ENCODE measurements at regions of chr3 and their contacts with region 1.

Region 1: DNA sequence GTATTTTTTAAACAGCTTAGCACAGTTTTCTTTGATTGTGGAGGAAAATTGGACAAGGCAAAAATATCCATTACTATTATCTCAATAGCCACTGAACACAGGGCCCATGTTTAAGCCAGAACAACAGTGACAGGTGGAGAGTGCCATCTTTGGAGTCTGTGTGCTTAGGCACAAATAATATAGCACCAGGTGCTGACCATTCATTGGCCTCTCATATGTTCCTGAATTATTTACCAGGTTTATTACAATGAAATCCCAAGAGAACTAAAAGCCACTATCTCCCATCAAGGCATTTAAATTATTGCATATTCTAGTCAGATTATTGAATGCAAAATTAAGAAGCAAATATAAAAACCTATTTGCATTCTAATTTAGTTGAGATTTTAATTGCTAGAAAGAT is 39.6 kb downstream of the GPR156 start:
- DNase-seq: no peak
- ATAC-seq: no peak
- H3K4me3 Mint-ChIP-seq: no peak overlapping the region
- H3K27ac Mint-ChIP-seq: no peak overlapping the region
- H3K4me1 Mint-ChIP-seq: no peaks in the 10 kb centered on the region
- H3K27me3 Mint-ChIP-seq: peaks cover 12% of the 10 kb centered on the region

Region 2: DNA sequence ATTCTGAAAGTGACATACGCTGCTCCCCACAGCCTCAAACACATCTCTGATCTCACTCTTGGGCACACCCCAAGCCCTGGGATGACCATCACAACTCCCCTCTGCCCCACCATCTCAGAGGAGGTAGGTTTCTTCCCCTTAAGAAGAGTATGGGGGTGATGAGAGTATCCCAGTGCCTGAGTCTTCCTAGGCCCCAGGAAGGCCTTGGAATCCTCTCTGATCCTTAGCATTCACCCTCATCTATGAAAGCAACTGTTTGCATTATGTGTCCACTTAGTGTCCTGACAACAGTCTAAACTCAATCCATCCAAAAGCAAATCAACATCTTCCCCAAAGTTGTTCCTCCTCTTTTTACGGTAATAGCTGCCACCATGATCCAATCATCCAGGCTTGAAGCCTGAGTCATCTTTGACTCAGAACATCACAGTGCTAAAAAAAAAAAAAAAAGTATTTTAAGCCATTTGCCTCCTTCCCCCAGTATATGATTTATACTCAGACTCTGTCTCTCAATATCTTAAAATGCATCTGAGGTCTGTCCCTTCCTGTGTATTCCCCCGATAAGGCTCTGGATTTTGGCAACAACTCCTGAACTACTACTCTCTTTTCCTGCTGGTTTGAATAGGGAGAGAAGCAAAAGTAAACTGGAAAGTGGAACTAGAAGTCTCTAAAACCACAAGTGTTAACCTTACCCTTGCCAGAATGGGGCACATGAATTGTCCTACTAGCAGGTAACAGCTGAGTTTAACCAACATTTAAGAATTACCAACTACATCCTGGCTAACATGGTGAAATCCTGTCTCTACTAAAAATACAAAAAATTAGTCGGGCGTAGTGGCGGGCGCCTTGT is 607.5 kb before region 1 on chr3:
- CTCF ChIA-PET with region 1: no interaction called
- POLR2A ChIA-PET with region 1: no interaction called
- intact Hi-C with region 1: no loop called
- DNase-seq: peak; percentile 14
- ATAC-seq: peak; percentile 34
- H3K4me3 Mint-ChIP-seq: no peak overlapping the region
- H3K27ac Mint-ChIP-seq: peak overlapping the region; percentile 92
- H3K4me1 Mint-ChIP-seq: peaks cover 38% of the 10 kb centered on the region
- H3K27me3 Mint-ChIP-seq: no peaks in the 10 kb centered on the region

Region 3: DNA sequence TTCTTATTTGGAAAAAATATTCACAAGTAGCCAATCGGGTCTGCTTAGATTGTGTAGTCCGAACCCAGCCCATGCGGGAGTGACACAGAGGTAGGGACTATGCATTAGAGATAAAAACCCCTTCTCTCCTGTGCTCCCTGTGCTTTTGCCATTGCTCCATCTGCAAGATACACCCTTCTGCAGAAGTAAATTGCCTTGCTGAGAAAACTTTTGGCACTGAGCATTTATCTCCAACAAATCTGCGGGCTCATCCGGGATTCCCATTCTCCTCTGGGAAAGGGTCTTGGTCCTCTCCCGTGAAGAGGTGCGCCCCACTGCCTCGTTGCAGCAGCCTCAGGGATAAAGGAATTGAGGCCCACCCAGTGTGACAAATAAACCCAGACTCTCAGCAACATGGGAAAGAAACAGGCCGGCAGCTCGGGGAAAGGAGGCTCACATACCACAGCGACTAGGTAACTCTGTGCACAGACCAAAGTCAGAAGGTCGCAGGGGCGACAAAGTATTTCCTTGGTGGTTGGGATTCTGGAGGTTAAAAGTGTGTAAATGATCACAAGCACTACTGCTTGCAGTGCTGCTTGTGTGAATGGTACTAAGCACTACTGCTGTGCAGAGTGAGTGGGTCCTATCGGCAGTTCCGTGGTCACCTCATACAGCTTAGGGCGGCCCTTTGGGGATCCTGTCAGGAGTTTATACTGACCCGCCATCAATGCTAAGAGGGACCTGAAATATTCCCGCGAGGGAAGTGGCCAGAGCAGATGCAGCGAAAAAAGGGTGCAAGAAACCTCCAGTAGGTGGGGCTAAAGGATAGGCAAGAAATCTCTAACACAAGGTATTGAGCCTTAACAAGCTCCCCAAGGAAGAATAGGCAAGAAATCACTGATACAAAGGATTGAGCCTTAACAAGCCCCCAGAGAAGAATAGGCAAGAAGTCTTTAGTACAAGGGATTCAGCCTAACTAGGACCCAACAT is 205.5 kb before region 1 on chr3:
- CTCF ChIA-PET with region 1: no interaction called
- POLR2A ChIA-PET with region 1: no interaction called
- intact Hi-C with region 1: no loop called
- DNase-seq: no peak
- ATAC-seq: no peak
- H3K4me3 Mint-ChIP-seq: no peak overlapping the region
- H3K27ac Mint-ChIP-seq: no peak overlapping the region
- H3K4me1 Mint-ChIP-seq: peaks cover 10% of the 10 kb centered on the region
- H3K27me3 Mint-ChIP-seq: no peaks in the 10 kb centered on the region

Region 4: DNA sequence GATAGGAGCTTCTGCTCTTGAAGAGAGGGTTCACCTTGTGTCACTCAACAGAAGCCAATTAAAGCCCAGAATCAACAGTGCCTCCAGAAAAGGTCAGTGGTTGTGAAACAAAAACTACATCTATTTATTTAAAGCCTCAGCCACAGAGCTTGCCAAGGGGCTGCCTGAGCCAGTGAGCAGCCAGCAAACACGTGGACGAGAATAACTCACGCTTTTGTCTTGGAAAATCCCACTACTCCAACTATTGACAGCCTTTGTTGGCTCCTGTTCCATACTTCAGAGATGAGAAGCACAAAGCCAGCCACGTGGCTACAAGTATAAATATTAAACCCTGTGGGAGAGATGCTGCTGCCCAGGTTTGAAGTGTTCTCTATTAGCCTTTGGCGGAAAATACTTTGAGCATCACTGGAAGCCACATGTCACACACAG is 29.4 kb after region 1 on chr3:
- CTCF ChIA-PET with region 1: interaction called, 10 read pairs
- POLR2A ChIA-PET with region 1: no interaction called
- intact Hi-C with region 1: no loop called
- DNase-seq: no peak
- ATAC-seq: no peak
- H3K4me3 Mint-ChIP-seq: no peak overlapping the region
- H3K27ac Mint-ChIP-seq: no peak overlapping the region
- H3K4me1 Mint-ChIP-seq: no peaks in the 10 kb centered on the region
- H3K27me3 Mint-ChIP-seq: peaks cover 27% of the 10 kb centered on the region

Region 5: GRCh38 chr3:120355486-120355885 is 110.1 kb after region 1 on chr3:
- CTCF ChIA-PET with region 1: interaction called, 3 read pairs
- POLR2A ChIA-PET with region 1: no interaction called
- intact Hi-C with region 1: loop called (anchors 2 kb)
- DNase-seq: no peak
- ATAC-seq: no peak
- H3K4me3 Mint-ChIP-seq: no peak overlapping the region
- H3K27ac Mint-ChIP-seq: no peak overlapping the region
- H3K4me1 Mint-ChIP-seq: no peaks in the 10 kb centered on the region
- H3K27me3 Mint-ChIP-seq: peaks cover 10% of the 10 kb centered on the region